A673 (cell line): ENCODE measurements at regions of chr12 and their contacts with region 1.

Region 1: DNA sequence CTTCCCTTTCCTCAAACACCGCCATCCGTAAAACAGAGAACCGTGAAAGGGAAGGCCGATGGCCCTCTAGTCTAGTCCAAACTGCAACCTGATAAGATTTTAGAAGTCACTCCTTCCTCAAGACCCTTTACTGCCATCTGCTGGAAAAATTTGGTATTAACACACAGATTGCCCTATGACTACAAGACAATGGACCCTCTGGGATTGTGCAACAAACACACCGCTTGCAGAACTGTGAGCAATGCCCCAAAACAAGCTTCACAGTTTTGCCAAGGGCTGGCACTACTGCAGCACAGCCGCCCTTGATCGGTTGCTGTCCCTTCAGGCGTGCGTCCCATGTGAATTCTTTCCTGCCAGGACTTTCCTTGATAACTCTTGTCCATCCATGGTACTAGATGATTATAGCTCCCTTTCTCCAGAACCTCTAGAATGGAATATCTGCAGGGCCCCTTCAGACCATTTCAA is 23.1 kb downstream of the LLPH start:
- DNase-seq: peak; percentile 98
- H3K4me3 ChIP-seq: peak overlapping the region; percentile 11
- H3K27ac ChIP-seq: peak overlapping the region; percentile 86
- H3K4me1 ChIP-seq: peaks cover 75% of the 10 kb centered on the region
- H3K27me3 ChIP-seq: no peaks in the 10 kb centered on the region
- CTCF ChIP-seq: peak; percentile 82

Region 2: DNA sequence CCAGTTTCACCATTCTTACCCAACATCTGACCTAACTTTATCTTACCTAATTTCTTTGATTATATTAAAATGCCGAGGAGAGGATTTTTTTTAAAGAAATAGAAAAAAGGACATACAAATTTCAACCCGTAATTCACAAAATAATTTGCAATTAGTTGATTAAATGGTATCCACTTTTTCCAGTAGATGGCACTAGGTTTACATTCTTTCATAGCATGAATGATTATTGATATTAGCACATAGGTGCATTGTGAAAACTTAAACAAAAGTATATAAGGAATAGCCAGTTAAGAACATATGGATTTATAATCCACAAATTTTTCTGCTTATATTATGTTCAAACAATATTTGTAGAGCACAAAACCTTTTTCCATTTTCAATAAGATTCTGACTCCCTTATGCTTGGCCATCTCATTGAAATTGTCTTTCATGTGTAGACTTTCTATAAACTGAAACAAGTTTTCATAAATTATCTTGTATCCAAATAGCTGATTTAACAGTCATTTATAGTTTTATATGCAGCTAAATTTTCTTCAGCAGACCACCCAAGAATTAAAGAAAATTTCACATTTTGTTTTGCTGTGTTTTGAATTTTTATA is 793.7 kb before region 1 on chr12:
- CTCF ChIA-PET with region 1: no interaction called
- POLR2A ChIA-PET with region 1: no interaction called
- intact Hi-C with region 1: loop called (anchors 5 kb)
- DNase-seq: peak; percentile 58
- H3K4me3 ChIP-seq: no peak overlapping the region
- H3K27ac ChIP-seq: no peak overlapping the region
- H3K4me1 ChIP-seq: peaks cover 52% of the 10 kb centered on the region
- H3K27me3 ChIP-seq: no peaks in the 10 kb centered on the region
- CTCF ChIP-seq: peak; percentile 76

Region 3: GRCh38 chr12:65986047-65986446 is 121.4 kb before region 1 on chr12:
- CTCF ChIA-PET with region 1: no interaction called
- POLR2A ChIA-PET with region 1: no interaction called
- intact Hi-C with region 1: loop called (anchors 10 kb)
- DNase-seq: no peak
- H3K4me3 ChIP-seq: no peak overlapping the region
- H3K27ac ChIP-seq: no peak overlapping the region
- H3K4me1 ChIP-seq: no peaks in the 10 kb centered on the region
- H3K27me3 ChIP-seq: no peaks in the 10 kb centered on the region
- CTCF ChIP-seq: peak; percentile 26; the same call in 1 of the 2 replicates

Region 4: GRCh38 chr12:66047411-66048021 is 60.0 kb before region 1 on chr12:
- CTCF ChIA-PET with region 1: no interaction called
- POLR2A ChIA-PET with region 1: no interaction called
- intact Hi-C with region 1: no loop called
- DNase-seq: no peak
- H3K4me3 ChIP-seq: no peak overlapping the region
- H3K27ac ChIP-seq: no peak overlapping the region
- H3K4me1 ChIP-seq: peaks cover 21% of the 10 kb centered on the region
- H3K27me3 ChIP-seq: no peaks in the 10 kb centered on the region
- CTCF ChIP-seq: no peak

Region 5: DNA sequence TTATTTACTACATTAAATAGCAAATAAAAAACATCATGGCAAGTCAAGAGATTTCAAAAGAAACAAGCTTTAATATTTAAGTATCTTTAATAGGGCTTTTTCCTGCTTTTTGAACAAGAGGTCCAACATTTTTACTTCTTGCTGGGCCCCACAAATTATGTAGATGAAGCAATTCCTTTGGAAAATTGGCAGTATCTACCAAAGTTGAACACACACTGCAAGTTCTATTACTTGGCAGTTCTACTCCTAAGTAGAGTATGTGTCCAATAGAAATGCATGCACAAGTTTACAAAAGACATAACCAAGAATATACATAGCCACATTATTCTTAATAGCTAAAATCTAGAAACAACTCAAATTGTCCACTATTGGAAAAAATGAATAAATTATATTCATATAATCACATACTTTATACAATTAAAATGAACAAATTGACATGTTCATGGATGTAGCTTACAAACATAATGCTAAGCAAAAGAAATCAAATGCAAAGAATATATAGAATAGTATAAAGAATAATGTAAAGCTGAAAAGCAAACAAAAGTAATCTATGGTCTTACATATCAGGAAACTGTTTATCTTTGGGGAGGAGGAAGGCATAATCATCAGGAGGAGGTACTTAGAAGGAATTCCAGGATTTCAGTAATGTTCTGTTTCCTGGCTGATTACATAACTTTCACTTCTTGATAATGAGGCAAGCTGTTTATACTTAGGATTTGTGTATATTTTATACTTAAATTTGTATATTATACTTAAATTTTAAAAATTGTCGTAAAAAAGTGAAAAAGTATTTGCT is 68.8 kb after region 1 on chr12:
- CTCF ChIA-PET with region 1: no interaction called
- POLR2A ChIA-PET with region 1: no interaction called
- intact Hi-C with region 1: no loop called
- DNase-seq: no peak
- H3K4me3 ChIP-seq: no peak overlapping the region
- H3K27ac ChIP-seq: no peak overlapping the region
- H3K4me1 ChIP-seq: no peaks in the 10 kb centered on the region
- H3K27me3 ChIP-seq: no peaks in the 10 kb centered on the region
- CTCF ChIP-seq: no peak